ENCODE measurements at regions of chr9 and their contacts with region 1.

Region 1: DNA sequence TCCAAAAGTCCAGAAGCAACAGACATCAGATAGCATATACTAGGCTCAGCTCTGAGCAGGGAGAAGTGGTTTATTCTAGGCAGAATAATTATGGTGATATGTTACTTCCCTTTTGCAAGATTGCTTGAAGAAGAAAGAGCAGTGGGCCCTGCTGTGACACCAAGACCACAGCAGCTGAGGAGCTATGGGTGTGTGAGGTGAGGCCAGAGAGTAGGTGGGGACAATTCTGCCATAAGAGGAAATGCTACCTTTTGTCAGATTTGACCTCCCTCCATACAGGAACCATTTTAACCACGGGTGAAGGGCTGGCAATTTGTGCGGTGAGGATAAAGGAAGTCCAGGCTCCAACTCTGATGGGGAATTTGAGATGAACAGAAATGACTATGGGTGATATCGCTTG is 51.3 kb downstream of the TNFSF15 start:
- DNase-seq: no peak

Region 2: GRCh38 chr9:115845653-115846312 is 1091.2 kb after region 1 on chr9:
- intact Hi-C with region 1: loop called in 1 of 2 experiments (anchors 10 kb)
- DNase-seq: no peak

Measured in posterior vena cava (tissue), 2 donors.